ENCODE measurements at regions of chr4 and their contacts with region 1.

Region 1: DNA sequence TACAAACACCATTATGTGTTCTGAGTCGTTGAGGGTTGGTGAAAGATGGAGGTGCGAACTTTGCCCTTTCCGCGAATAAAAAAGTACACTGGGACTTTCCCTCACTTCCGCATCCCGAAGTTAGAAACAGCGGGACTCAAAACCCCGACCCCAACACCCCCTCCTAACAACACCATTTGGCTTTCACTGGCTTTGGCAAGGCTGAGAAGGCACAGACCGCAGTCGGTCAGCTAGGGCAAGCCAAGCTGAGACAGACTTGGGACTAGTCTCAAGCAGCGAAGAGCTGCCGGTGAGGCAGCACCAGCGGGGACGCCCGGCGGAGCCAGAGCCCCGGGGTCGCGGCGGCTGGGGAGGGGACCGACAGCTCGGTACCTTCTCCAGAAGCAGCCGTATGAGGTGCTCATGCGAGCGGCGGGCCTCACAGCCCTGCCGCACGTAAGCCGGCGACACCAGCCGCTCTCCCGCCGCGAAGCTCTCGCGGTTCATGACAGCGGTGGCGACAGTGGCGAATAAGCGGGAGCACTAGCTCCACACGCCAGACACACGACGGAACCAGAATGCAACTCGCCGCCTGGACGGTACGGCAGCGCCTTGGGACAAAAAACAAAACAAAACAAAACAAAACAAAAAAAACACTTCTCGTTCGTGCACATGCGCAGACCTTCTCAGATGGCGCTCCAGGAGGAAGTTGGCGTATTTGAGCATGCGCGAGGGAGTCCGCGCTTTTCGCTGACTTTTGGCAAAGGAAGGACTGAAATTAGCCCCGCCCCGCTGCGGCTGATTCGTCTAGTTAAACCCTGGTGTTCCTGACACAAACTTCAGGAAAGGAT is at the start of gene SEPSECS:
- DNase-seq: peak; percentile 96 to 99
- ATAC-seq: peak; percentile 94 to 97 (median 96)
- H3K4me3 ChIP-seq: peak within 1 kb of the TSS; percentile 57 to 99 (median 82)
- H3K27ac ChIP-seq: peak within 1 kb of the TSS; percentile 79 to 99 (median 94)
- H3K4me1 ChIP-seq: peaks cover 0 to 37% (median 19%) of the 10 kb centered on the region in 9 donors
- H3K27me3 ChIP-seq: no peaks in the 10 kb centered on the region
- CTCF ChIP-seq: no peak
- total RNA-seq, gene SEPSECS: 2.9 to 9.1 (median 6.2) TPM

Region 2: DNA sequence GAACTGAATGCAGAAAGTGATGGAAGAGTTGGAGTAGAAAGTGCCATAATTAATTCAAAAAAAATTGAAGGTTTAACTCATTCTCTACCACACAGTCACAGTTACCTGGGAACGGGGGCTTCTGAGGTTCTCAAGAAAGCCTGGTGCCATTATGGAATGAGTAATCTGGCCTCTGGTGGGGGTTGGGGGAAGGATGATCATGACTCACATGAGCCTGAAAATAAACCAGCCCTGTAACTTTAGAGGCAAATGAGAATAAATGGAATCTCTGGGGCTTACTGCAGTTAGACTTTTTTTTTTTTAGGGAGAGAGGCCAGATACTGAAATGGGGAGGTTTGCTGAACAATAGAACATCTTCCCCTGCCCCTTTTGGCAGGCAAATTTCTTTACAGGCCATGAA is 309.4 kb before region 1 on chr4:
- intact Hi-C with region 1: no loop called
- DNase-seq: no peak
- ATAC-seq: peak in 1 of 8 donors; percentile 31
- H3K4me3 ChIP-seq: no peak overlapping the region
- H3K27ac ChIP-seq: no peak overlapping the region
- H3K4me1 ChIP-seq: peaks cover 0 to 21% (median 0%) of the 10 kb centered on the region in 9 donors
- H3K27me3 ChIP-seq: no peaks in the 10 kb centered on the region
- CTCF ChIP-seq: no peak

Region 3: GRCh38 chr4:25299480-25300188 is 139.5 kb after region 1 on chr4:
- intact Hi-C with region 1: loop called in 2 of 10 experiments (anchors 10 kb)
- DNase-seq: no peak
- ATAC-seq: no peak
- H3K4me3 ChIP-seq: no peak overlapping the region
- H3K27ac ChIP-seq: no peak overlapping the region
- H3K4me1 ChIP-seq: no peaks in the 10 kb centered on the region
- H3K27me3 ChIP-seq: peaks cover 0 to 14% (median 4%) of the 10 kb centered on the region in 7 donors
- CTCF ChIP-seq: no peak

Region 4: GRCh38 chr4:25312496-25313200 is 152.5 kb after region 1 on chr4 and contains the start of gene ZCCHC4:
- intact Hi-C with region 1: loop called in 6 of 10 experiments (anchors 5 to 10 kb)
- DNase-seq: peak; percentile 90
- ATAC-seq: peak; percentile 96 to 99 (median 99)
- H3K4me3 ChIP-seq: peak within 1 kb of the TSS; percentile 64 to 93 (median 75)
- H3K27ac ChIP-seq: peak within 1 kb of the TSS in 9 of 10 donors; percentile 32 to 87 (median 69)
- H3K4me1 ChIP-seq: peaks cover 2 to 26% (median 8%) of the 10 kb centered on the region in 9 donors
- H3K27me3 ChIP-seq: no peaks in the 10 kb centered on the region
- CTCF ChIP-seq: peak in 8 of 9 donors; percentile 96 to 100 (median 99)
- total RNA-seq, gene ZCCHC4: 6.8 to 9.6 (median 7.5) TPM

Measured in heart right ventricle (tissue), 16 donors.